HEK293 (cell line): ENCODE measurements at regions of chr9 and their contacts with region 1.

Region 1: DNA sequence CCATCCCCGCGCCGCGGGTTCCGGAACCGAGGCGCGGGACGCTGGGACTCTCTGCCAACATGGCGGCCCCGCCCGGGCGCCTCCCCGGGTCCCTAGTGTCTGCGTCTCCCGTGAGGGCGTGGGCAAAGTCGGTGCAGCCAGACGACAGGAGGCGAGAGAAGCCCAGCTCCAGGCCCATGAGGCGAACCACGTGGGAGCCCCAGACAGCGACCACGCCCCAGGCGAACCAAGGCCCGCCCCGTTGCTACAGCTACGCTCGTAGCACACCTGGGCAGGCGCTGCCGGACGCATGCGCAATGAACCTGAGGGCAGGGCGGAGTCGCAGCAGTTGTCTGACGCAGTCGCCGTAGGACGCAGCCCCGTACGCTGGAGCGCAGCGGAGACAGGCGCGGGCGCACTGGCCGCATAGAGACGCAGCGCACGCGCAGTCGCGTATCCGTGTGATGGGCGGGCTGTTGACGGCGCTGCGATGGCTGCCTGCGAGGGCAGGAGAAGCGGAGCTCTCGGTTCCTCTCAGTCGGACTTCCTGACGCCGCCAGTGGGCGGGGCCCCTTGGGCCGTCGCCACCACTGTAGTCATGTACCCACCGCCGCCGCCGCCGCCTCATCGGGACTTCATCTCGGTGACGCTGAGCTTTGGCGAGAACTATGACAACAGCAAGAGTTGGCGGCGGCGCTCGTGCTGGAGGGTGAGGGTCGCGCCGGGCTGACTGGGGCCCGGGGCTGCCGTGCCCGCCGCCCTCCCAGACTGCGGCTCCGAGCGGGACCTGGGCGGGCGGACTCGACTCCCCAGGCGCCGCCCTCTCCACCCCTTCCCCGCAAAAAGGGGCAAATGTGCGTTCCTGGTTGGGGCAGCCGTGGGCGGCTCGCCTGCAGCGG is at the start of gene MAN1B1:
- H3K4me3 ChIP-seq: peak within 1 kb of the TSS; percentile 57
- H3K27ac ChIP-seq: peak within 1 kb of the TSS; percentile 70
- H3K4me1 ChIP-seq: 0 out of 2 replicates have a peak, but pooled peaks cover 3% of the 10 kb centered on the region
- CTCF ChIP-seq: no peak

Region 2: GRCh38 chr9:136671646-136672430 is 414.9 kb before region 1 on chr9:
- CTCF ChIA-PET with region 1: no interaction called
- POLR2A ChIA-PET with region 1: no interaction called
- H3K4me3 ChIP-seq: no peak overlapping the region
- H3K27ac ChIP-seq: no peak overlapping the region
- H3K4me1 ChIP-seq: no peaks in the 10 kb centered on the region
- CTCF ChIP-seq: peak; percentile 88

Region 3: GRCh38 chr9:137064027-137064879 is 22.5 kb before region 1 on chr9:
- CTCF ChIA-PET with region 1: interaction called, 34 read pairs
- POLR2A ChIA-PET with region 1: interaction called, 137 read pairs
- H3K4me3 ChIP-seq: no peak overlapping the region
- H3K27ac ChIP-seq: no peak overlapping the region
- H3K4me1 ChIP-seq: peaks cover 3% of the 10 kb centered on the region; the same call in 1 of the 2 replicates
- CTCF ChIP-seq: peak; percentile 95

Region 4: DNA sequence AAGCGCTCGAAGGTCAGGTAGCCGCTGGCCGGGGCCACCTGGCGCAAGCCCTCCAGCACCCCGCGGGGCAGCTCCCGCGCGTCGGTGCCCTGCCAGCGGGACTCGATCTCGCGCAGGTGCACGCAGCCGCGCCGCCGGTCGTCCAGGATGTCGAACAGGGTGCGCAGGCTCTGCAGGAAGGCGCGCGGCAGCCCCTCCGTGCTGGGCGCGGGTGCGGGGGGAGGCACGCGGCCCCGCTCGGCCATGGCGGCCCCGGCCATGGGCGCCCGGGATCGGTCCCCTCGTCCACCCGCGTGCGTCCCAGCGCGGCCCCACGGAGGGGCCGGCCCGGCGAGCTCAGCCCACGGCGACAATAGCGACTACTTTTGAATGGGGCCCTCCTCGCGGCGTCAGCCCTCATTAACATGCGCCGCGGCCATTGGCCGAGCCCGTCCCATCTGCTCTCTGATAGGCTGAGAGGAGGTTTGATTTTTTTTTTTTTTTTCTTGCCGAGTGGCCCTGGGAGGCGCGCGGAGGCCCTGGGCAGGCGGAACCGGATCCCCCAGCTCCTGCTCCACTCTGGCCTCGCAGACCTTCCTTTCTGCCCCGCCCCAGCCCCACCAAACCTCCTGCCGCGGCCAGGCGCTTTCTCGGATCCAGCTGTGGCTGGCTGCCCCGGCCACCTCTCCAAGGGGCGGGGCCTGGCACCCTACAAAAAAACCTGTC is 16.4 kb before region 1 on chr9 and contains the start of gene SAPCD2:
- CTCF ChIA-PET with region 1: interaction called, 34 read pairs
- POLR2A ChIA-PET with region 1: interaction called, 137 read pairs
- H3K4me3 ChIP-seq: peak within 1 kb of the TSS; percentile 38
- H3K27ac ChIP-seq: peak within 1 kb of the TSS; percentile 71
- H3K4me1 ChIP-seq: peaks cover 10% of the 10 kb centered on the region; the same call in 1 of the 2 replicates
- CTCF ChIP-seq: no peak

Region 5: DNA sequence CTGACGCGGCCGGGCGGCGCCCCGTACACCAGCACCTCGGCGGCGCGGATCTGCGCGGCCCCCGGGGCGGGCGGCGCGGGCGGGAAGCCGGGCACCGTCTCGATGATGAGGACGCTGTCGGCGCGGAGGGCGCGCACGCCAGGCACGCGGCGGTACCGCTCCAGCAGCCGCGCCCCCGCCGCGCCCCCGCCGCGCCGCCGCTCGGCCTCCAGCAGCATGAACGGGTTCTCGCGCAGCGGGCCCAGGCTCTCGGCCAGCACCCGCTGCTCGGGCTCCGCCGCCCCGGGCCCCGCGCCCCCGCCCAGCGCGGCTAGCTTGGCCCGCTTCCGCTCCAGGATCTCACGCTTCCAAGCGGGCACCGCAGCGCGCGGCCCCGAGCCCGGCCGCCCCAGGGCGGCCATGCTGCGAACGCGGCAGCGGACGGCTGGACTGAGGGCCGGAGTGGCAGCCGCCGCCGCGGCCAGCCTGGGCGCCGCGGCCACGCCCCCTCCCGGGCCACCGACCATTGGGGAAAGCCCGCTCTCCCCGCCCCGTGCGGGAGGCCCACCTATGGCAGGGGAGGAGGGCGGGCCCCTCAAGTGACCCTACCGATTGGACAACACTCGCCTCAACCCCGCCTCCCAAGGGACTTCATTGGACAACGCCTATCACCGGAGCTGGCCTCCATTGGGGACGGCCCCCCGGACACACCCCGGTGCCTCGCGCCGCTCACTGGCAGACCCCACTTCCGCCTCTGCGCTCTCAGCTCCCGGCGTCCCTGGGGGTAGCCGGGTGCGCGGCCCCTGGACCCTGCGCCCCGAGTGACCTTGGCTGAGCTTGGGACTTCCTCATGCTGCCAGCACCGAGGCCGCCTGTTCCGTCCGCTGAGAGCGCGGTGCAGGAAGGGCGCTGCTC is 113.8 kb after region 1 on chr9 and contains the start of gene TPRN:
- CTCF ChIA-PET with region 1: interaction called, 3 read pairs
- POLR2A ChIA-PET with region 1: interaction called, 22 read pairs
- H3K4me3 ChIP-seq: peak within 1 kb of the TSS; percentile 86
- H3K27ac ChIP-seq: peak within 1 kb of the TSS; percentile 57; the same call in 1 of the 2 replicates
- H3K4me1 ChIP-seq: peaks cover 9% of the 10 kb centered on the region
- CTCF ChIP-seq: no peak